ENCODE measurements at regions of chr6 and their contacts with region 1.

Region 1: GRCh38 chr6:154805288-154805911 is 72.2 kb downstream of the SCAF8 start:
- DNase-seq: no peak
- ATAC-seq: peak; percentile 73

Region 2: GRCh38 chr6:154675602-154676088 is 129.8 kb before region 1 on chr6:
- intact Hi-C with region 1: loop called (anchors 5 kb)
- DNase-seq: peak; percentile 86
- ATAC-seq: peak; percentile 99